Heart right ventricle (tissue), 16 donors: ENCODE measurements at regions of chr3 and their contacts with region 1.

Region 1: DNA sequence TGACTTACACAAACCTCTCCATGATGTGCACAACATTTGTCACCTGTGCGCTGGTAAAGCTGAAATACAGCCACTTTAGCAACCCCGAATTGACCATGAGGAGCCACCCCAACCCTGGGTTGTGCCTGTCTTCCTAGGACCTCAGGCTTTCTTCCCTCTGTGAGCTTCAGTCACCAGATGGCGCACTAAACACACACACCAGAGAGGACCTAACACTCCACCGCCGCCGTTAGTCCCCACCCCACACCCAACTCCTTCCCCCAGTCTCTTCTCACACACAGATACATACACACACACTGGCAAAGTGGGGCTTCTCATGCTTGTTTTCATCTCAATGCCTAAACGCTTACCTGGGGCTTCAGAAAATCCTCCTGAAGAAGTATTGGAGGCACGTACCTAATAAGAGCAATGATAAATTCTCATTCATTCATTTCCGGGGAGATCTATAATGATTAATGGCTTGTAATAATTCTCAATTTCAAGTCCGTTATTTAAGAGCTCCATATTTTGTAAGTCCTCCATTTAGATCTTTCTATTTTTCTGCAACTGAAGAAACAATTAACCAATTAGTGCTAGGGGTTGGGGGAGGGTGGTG is 2.1 kb upstream of the CCDC80 start:
- DNase-seq: peak; percentile 69 to 87
- ATAC-seq: peak; percentile 85 to 91 (median 88)
- H3K4me3 ChIP-seq: peak overlapping the region in 5 of 10 donors; percentile 16 to 43 (median 21)
- H3K27ac ChIP-seq: peak overlapping the region in 5 of 10 donors; percentile 49 to 90 (median 68)
- H3K4me1 ChIP-seq: peaks cover 0 to 37% (median 25%) of the 10 kb centered on the region in 9 donors
- H3K27me3 ChIP-seq: peaks cover 0 to 19% (median 9%) of the 10 kb centered on the region in 7 donors
- CTCF ChIP-seq: peak; percentile 39 to 89 (median 79)

Region 2: DNA sequence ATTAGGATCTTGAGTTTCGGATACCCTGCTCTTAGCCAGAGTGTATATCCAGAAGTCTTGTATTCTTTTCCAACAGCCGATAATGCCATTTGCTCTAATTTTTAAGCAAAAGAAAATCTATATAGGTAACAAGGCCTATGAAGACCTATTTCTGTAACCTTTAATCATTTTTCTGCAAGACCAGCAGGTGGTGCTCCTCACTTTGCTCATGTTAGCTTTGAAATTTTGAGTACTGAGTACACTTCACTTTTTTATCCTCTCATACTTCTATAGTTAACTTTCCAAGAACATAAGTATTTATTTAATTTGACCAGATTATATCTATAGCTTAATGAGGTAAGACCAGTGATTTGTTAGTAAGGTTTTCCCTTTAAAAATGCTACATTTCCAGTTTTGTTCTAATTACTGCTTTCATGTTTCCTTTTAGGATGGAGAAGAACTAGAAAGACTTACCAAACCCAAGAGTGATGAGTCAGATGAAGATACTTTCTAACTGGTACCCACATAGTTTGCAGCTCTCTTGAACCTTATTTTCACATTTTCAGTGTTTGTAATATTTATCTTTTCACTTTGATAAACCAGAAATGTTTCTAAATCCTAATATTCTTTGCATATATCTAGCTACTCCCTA is 60.6 kb before region 1 on chr3:
- intact Hi-C with region 1: loop called in 1 of 10 experiments (anchors 10 kb)
- DNase-seq: peak in 1 of 2 donors; percentile 19
- ATAC-seq: no peak
- H3K4me3 ChIP-seq: no peak overlapping the region
- H3K27ac ChIP-seq: no peak overlapping the region
- H3K4me1 ChIP-seq: peaks cover 0 to 16% (median 0%) of the 10 kb centered on the region in 9 donors
- H3K27me3 ChIP-seq: no peaks in the 10 kb centered on the region
- CTCF ChIP-seq: peak; percentile 25 to 76 (median 66)

Region 3: GRCh38 chr3:112744825-112745566 is 102.0 kb after region 1 on chr3:
- intact Hi-C with region 1: loop called in 1 of 10 experiments (anchors 5 kb)
- DNase-seq: peak in 1 of 2 donors; percentile 17
- ATAC-seq: peak in 7 of 8 donors; percentile 45 to 88 (median 75)
- H3K4me3 ChIP-seq: no peak overlapping the region
- H3K27ac ChIP-seq: peak overlapping the region in 6 of 10 donors; percentile 2 to 70 (median 43)
- H3K4me1 ChIP-seq: peaks cover 0 to 38% (median 18%) of the 10 kb centered on the region in 9 donors
- H3K27me3 ChIP-seq: no peaks in the 10 kb centered on the region
- CTCF ChIP-seq: no peak

Region 4: DNA sequence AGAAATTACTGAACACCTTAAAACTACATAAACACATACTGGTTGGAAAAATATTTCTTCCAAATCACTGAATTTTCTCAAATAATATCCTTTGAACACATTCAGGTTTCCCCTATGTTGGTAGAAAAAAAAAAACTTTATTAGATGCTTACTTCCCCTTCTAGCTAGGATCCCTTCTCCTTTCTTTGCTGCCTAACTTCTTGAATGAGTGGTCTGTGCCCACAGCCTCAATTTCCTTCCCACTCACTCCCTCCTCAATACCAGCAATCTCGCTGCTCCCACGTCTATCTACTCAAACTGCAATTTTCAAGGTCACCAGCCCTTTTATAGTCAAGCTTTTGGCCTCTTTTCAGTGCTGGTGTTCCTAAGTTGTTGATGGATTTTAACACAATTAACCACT is 323.6 kb after region 1 on chr3:
- intact Hi-C with region 1: loop called in 1 of 10 experiments (anchors 5 kb)
- DNase-seq: no peak
- ATAC-seq: peak in 3 of 8 donors; percentile 41 to 49 (median 42)
- H3K4me3 ChIP-seq: no peak overlapping the region
- H3K27ac ChIP-seq: peak overlapping the region in 1 of 10 donors; percentile 32
- H3K4me1 ChIP-seq: peaks cover 0 to 44% (median 0%) of the 10 kb centered on the region in 9 donors
- H3K27me3 ChIP-seq: peaks cover 0 to 19% (median 4%) of the 10 kb centered on the region in 7 donors
- CTCF ChIP-seq: no peak

Region 5: GRCh38 chr3:112984485-112984884 is 341.5 kb after region 1 on chr3:
- intact Hi-C with region 1: loop called (anchors 2 to 5 kb)
- DNase-seq: no peak
- ATAC-seq: peak in 1 of 8 donors; percentile 44
- H3K4me3 ChIP-seq: no peak overlapping the region
- H3K27ac ChIP-seq: no peak overlapping the region
- H3K4me1 ChIP-seq: peaks cover 0 to 10% (median 0%) of the 10 kb centered on the region in 9 donors
- H3K27me3 ChIP-seq: no peaks in the 10 kb centered on the region
- CTCF ChIP-seq: no peak